ENCODE measurements at regions of chr1 and their contacts with region 1.

Region 1: DNA sequence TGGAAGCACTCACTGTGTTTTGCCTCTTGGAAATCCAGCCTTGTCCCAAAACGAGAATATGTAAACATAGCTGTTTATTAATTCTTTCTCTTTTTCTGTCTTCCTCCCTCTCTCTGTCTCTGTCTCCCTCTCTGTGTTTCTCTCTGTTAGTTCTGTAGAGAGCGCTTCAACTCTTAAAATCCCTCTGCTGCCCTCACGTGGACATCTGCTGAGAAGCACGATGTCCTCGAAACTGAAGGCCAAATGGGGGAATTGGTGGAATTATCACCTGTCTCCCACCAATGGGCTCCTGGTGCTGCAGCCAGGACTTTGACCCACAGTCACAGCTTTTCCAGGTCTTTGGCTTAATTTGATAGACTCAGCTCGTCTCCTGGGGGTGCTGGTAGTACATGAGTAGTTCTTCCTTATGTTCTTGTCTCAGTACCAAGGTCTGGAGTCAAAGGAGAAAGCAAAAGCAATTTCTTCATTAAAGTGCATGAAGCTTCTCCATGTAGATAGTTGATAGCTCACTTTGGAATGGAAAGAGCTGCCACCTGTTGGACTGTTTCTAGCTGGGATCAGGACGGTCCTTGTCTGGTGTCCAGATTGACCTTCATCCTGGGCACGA is 5.5 kb upstream of the GBP6 start:
- DNase-seq: peak; percentile 75 to 85 (median 78)
- ATAC-seq: peak; percentile 71 to 93 (median 90)
- H3K4me3 ChIP-seq: no peak overlapping the region
- H3K27ac ChIP-seq: peak overlapping the region in 2 of 12 donors; percentile 33 to 49
- H3K4me1 ChIP-seq: peaks cover 0 to 26% (median 5%) of the 10 kb centered on the region in 12 donors
- H3K27me3 ChIP-seq: no peaks in the 10 kb centered on the region
- CTCF ChIP-seq: peak; percentile 62 to 91 (median 84)
- POLR2A ChIP-seq: no peak

Region 2: DNA sequence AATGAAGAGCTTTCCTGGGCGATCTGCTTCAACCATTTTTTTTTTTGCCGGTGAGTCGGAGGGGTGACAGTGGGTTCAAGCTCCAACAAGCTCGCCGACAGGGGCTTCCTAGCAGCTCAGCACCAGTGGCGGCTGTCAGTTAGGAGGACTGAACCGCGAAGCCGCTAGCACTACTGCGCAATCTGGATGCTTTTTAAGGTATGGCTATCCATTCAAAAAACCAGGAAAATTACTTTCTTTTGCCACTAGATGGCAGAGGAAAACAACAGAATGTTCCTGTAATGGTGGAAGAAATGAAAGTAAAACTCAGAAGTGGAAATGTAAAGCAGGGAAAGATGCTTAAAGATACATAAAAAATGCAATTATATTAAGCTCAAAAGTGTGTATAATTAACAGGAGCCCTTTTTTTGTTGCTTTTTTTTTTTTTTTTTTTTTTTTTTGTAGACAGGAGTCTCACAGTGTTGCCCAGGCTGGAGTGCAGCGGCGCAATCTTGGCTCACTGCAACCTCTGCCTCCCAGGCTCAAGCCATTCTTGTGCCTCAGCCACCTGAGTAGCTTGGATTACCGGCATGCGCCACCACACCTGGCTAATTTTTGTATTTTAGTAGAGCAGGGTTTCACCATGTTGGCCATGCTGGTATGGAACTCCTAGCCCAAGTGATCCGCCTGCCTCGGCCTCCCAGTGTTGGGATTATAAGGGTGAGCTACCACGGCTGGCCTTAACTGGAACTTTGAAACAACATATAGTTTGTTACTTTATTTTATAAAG is 374.4 kb before region 1 on chr1:
- intact Hi-C with region 1: loop called in 1 of 10 experiments (anchors 5 kb)
- DNase-seq: peak in 1 of 5 donors; percentile 32
- ATAC-seq: peak in 2 of 4 donors; percentile 57 to 66
- H3K4me3 ChIP-seq: peak overlapping the region in 8 of 12 donors; percentile 18 to 51 (median 34)
- H3K27ac ChIP-seq: peak overlapping the region in 10 of 12 donors; percentile 5 to 61 (median 53)
- H3K4me1 ChIP-seq: peaks cover 0 to 72% (median 26%) of the 10 kb centered on the region in 12 donors
- H3K27me3 ChIP-seq: no peaks in the 10 kb centered on the region
- CTCF ChIP-seq: peak; percentile 48 to 70 (median 61)
- POLR2A ChIP-seq: no peak

Region 3: GRCh38 chr1:89085781-89086180 is 272.6 kb before region 1 on chr1:
- intact Hi-C with region 1: loop called in 8 of 10 experiments (anchors 1 to 10 kb)
- DNase-seq: peak in 1 of 5 donors; percentile 42
- ATAC-seq: peak in 3 of 4 donors; percentile 41 to 76 (median 52)
- H3K4me3 ChIP-seq: no peak overlapping the region
- H3K27ac ChIP-seq: no peak overlapping the region
- H3K4me1 ChIP-seq: peaks cover 0 to 12% (median 0%) of the 10 kb centered on the region in 12 donors
- H3K27me3 ChIP-seq: no peaks in the 10 kb centered on the region
- CTCF ChIP-seq: peak in 10 of 12 donors; percentile 53 to 90 (median 76)
- POLR2A ChIP-seq: no peak

Region 4: GRCh38 chr1:89198491-89199072 is 159.8 kb before region 1 on chr1 and contains the start of gene GBP4:
- intact Hi-C with region 1: loop called (anchors 2 to 10 kb)
- DNase-seq: peak; percentile 28 to 76 (median 52)
- ATAC-seq: peak; percentile 73 to 89 (median 79)
- H3K4me3 ChIP-seq: peak within 1 kb of the TSS; percentile 35 to 79 (median 67)
- H3K27ac ChIP-seq: peak within 1 kb of the TSS; percentile 67 to 94 (median 88)
- H3K4me1 ChIP-seq: peaks cover 0 to 63% (median 30%) of the 10 kb centered on the region in 12 donors
- H3K27me3 ChIP-seq: no peaks in the 10 kb centered on the region
- CTCF ChIP-seq: no peak
- POLR2A ChIP-seq: no peak
- total RNA-seq, gene GBP4: 4.3 to 46.4 (median 6.4) TPM

Region 5: DNA sequence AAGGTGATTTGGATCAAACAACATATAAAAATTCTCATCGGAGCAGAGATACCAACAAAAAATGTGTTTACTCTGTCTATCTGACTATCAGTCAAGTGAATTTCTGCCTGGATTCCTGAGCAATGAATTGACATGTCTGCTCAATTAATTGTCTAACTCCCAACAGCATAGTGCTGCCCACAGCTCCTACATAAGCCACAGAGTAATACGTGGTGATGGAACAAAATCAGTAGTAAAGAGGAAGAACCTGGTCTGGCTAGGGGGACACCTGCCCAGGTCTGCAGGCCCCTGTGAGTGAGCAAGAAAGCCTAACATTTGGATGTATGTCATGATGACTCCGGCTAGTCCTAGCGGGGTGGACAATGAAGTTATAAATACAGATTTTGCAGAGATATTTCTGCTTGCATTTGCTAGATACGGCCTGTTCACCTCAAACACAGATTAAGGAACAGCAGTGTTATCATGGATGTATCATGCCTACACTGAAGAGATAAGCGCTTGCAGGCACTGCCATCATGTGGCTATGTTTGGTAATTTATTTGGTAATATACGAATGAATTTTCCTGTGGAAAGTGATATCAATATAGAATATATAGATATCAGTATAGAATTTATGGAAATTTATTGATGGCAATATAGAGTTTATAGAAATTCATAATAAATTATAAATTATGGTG is 96.6 kb after region 1 on chr1:
- intact Hi-C with region 1: loop called in 4 of 10 experiments (anchors 5 to 10 kb)
- DNase-seq: peak in 3 of 5 donors; percentile 20 to 32 (median 24)
- ATAC-seq: no peak
- H3K4me3 ChIP-seq: no peak overlapping the region
- H3K27ac ChIP-seq: no peak overlapping the region
- H3K4me1 ChIP-seq: no peaks in the 10 kb centered on the region
- H3K27me3 ChIP-seq: no peaks in the 10 kb centered on the region
- CTCF ChIP-seq: peak; percentile 49 to 80 (median 64)
- POLR2A ChIP-seq: no peak

Region 6: DNA sequence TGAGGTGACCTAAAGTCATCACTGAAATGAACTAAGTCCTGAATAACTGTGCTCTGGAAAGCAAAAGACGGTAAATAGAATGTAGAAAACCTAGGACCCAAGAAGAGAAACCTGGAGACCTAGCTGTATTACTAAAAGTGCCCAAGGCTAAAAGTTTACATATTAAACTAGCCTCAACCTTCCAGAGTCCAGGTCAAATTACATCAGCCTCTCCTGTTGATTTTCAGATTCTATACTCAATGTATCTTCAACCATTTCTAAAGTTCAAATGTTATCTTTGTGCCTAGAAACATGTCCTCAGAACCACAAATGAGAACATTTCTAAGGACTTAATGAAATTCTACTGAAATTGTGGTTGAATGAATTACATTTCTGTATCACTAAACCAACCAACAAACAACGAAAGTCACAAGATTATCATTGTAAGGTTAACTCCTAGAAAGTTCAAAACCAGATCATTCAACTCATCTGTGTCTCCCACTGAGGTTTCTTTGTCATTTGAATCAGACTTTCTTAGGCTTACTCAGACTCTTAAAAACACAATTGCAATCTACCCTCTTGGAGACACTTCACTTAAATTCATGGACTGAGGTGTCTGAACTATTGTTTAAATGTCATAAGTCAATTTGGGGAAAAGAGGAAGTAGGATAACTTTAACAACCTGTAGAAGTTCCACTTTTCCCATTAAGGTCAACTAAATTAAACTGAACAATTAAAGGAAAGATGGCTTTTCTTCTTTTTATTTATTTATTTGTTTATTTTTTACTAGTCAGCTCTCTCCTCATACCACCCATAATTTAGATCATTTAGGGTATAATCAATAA is 1151.0 kb after region 1 on chr1:
- intact Hi-C with region 1: no loop called
- DNase-seq: no peak
- ATAC-seq: no peak
- H3K4me3 ChIP-seq: no peak overlapping the region
- H3K27ac ChIP-seq: no peak overlapping the region
- H3K4me1 ChIP-seq: no peaks in the 10 kb centered on the region
- H3K27me3 ChIP-seq: no peaks in the 10 kb centered on the region
- CTCF ChIP-seq: no peak
- POLR2A ChIP-seq: no peak